Testis (tissue), 5 donors: ENCODE measurements at regions of chr20 and their contacts with region 1.

Region 1: GRCh38 chr20:23420943-23421931 is at the start of gene NAPB:
- DNase-seq: peak; percentile 98
- H3K4me3 ChIP-seq: peak within 1 kb of the TSS; percentile 86 to 97
- H3K27ac ChIP-seq: peak within 1 kb of the TSS; percentile 95
- H3K4me1 ChIP-seq: peaks cover 32% of the 10 kb centered on the region
- H3K27me3 ChIP-seq: no peaks in the 10 kb centered on the region
- CTCF ChIP-seq: peak; percentile 46 to 89 (median 75)
- POLR2A ChIP-seq: peak; percentile 90
- total RNA-seq, gene NAPB: 37.8 to 40.4 TPM

Region 2: GRCh38 chr20:23361598-23362384 is 59.4 kb before region 1 on chr20 and contains the start of gene GZF1:
- intact Hi-C with region 1: loop called (anchors 5 kb)
- DNase-seq: peak; percentile 98
- H3K4me3 ChIP-seq: peak within 1 kb of the TSS; percentile 92 to 94
- H3K27ac ChIP-seq: peak within 1 kb of the TSS; percentile 90 to 97
- H3K4me1 ChIP-seq: peaks cover 63% of the 10 kb centered on the region
- H3K27me3 ChIP-seq: no peaks in the 10 kb centered on the region
- CTCF ChIP-seq: peak; percentile 6 to 43 (median 36)
- POLR2A ChIP-seq: peak; percentile 82
- total RNA-seq, gene GZF1: 46.1 to 47.4 TPM